ENCODE measurements at regions of chr6 and their contacts with region 1.

Region 1: GRCh38 chr6:168428052-168428826 is 12.7 kb upstream of the SMOC2 start:
- DNase-seq: no peak
- ATAC-seq: no peak
- H3K4me3 Mint-ChIP-seq: no peak overlapping the region
- H3K27ac Mint-ChIP-seq: no peak overlapping the region
- H3K4me1 Mint-ChIP-seq: no peaks in the 10 kb centered on the region
- H3K27me3 Mint-ChIP-seq: peaks cover 5% of the 10 kb centered on the region

Region 2: DNA sequence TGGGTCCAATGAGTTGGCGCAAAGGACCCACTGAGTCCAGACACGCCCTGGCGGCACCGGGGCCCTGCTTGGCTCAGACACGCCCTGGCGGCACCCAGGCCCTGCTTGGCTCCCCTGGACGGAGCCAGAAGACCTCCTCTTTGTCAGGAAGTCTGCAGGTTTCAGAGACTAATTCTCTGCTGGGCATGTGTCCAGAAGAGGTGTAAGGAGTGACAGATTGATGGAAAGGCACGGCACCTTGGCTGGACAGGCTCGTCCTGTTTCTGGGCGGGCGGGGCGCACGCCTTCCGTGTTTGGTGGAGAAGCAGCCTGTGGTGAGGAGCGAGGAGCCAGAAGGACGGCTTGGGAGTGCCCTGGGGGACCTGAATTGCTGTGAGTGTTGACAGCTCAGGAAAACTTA is 85.6 kb before region 1 on chr6:
- CTCF ChIA-PET with region 1: no interaction called
- POLR2A ChIA-PET with region 1: no interaction called
- intact Hi-C with region 1: no loop called
- DNase-seq: no peak
- ATAC-seq: no peak
- H3K4me3 Mint-ChIP-seq: no peak overlapping the region
- H3K27ac Mint-ChIP-seq: no peak overlapping the region
- H3K4me1 Mint-ChIP-seq: no peaks in the 10 kb centered on the region
- H3K27me3 Mint-ChIP-seq: peaks cover 10% of the 10 kb centered on the region

Region 3: DNA sequence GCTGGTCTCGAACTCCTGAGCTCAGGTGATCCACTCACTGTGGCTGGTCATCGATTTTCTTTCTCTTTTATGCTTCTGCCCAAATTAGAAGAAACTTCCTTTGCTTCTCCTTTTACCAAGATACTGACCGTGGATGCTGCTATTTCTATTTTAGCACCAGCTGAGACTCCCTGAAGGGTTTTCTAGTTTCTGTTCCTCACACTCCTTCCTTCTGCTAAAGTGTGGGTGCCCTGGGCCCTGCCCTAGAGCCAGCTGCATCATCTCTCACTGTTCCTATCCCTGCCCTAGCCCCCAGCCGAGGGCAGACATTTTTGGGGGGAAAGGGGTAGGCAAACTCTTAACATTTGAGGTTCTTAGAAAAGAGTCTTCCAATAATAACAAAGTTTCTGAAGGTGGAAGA is 19.0 kb after region 1 on chr6:
- CTCF ChIA-PET with region 1: no interaction called
- POLR2A ChIA-PET with region 1: interaction called, 12 read pairs
- intact Hi-C with region 1: no loop called
- DNase-seq: no peak
- ATAC-seq: no peak
- H3K4me3 Mint-ChIP-seq: no peak overlapping the region
- H3K27ac Mint-ChIP-seq: no peak overlapping the region
- H3K4me1 Mint-ChIP-seq: no peaks in the 10 kb centered on the region
- H3K27me3 Mint-ChIP-seq: peaks cover 37% of the 10 kb centered on the region